GM18951 (cell line): ENCODE measurements at regions of chrX and their contacts with region 1.

Region 1: DNA sequence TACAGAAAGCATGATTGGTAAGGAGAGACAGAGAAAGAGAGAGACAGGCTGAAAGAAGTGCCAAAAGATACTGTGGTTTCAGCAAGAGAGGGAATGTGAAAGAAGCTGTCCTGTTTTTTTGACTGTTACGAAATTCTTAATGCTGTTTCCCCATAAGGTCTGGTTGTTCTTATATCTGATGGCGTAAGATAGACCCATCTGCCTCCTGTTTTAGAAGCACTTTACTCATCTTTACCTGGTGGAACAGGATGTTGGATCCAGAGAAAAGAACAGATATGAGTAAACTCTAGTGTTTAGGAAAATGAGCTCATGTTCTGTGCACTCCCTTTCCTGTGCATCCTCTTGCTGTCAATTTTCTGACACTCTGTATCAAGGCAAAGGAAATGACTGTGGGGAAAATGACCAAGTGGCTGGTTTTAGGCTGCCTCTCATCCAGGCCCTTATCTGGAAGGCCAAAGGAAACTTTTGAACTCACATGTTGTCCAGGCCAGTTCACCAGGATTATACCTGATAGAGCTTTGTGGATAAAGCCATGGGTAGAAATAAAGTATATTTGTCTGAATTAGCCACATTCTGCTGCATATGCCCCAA is 311.7 kb upstream of the HTR2C start:
- POLR2A ChIP-seq: no peak

Region 2: DNA sequence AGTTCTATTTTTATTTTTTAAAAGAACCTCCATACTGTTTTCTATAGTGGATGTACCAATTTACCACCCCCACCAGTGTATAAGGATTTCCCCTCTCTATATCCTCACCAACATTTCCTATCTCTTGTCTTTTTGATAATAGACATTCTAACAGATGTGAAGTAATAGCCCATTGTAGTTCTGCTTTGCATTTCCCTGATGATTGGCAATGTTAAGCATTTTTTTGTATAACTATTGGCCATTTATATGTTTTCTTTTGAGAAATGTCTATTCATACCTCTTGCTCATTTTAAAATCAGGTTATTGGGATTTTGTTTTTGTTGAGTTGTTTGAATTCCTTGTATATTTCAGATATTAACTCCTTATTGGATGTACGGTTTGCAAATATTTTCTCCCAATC is 60.6 kb after region 1 on chrX:
- in situ Hi-C with region 1: no loop called
- POLR2A ChIP-seq: no peak

Region 3: GRCh38 chrX:114344756-114345349 is 72.7 kb after region 1 on chrX:
- in situ Hi-C with region 1: loop called (anchors 5 kb)
- POLR2A ChIP-seq: no peak